ENCODE measurements at regions of chr6 and their contacts with region 1.

Region 1: DNA sequence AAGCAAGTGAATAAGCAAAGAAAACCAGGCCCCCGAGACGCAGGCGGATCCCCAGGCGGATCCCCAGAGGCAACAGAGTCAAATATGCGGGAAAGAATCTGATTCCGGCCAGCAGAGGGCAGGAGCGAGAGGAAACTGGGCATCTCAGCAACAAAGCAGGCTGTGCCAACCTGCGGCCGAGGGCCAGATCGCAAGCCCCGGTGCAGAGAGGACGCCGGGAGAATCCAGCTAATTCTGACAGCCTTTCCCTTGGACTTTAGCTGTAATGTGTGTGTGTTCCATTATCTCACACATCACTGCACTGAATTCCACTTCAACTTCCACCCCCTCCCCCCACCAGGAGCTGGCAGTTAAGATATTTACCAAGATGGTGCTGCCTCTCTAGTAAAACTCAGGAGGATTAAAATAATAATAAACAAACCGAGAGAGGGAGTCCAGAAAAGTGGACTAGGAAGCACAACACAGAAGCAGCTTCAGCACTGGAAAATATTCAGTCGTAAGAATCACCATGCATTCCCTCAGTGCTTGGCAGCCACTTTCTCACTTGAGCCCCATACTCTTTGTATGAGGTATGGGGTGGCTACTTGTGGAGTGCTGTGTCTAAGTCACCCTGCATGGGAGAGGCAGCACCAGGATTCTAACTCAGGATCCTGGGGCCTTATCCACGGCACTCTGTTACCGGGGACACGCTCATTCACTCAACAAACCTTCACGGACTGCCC is 66.2 kb upstream of the SNX9 start:
- DNase-seq: peak; percentile 88
- ATAC-seq: peak; percentile 38
- H3K4me3 Mint-ChIP-seq: no peak overlapping the region
- H3K27ac Mint-ChIP-seq: no peak overlapping the region
- H3K4me1 Mint-ChIP-seq: peaks cover 53% of the 10 kb centered on the region
- H3K27me3 Mint-ChIP-seq: peaks cover 14% of the 10 kb centered on the region

Region 2: GRCh38 chr6:157845493-157846259 is 88.8 kb after region 1 on chr6:
- CTCF ChIA-PET with region 1: interaction called, 13 read pairs
- POLR2A ChIA-PET with region 1: interaction called, 3 read pairs
- DNase-seq: peak; percentile 10
- ATAC-seq: no peak
- H3K4me3 Mint-ChIP-seq: no peak overlapping the region
- H3K27ac Mint-ChIP-seq: no peak overlapping the region
- H3K4me1 Mint-ChIP-seq: peaks cover 34% of the 10 kb centered on the region
- H3K27me3 Mint-ChIP-seq: no peaks in the 10 kb centered on the region

Region 3: DNA sequence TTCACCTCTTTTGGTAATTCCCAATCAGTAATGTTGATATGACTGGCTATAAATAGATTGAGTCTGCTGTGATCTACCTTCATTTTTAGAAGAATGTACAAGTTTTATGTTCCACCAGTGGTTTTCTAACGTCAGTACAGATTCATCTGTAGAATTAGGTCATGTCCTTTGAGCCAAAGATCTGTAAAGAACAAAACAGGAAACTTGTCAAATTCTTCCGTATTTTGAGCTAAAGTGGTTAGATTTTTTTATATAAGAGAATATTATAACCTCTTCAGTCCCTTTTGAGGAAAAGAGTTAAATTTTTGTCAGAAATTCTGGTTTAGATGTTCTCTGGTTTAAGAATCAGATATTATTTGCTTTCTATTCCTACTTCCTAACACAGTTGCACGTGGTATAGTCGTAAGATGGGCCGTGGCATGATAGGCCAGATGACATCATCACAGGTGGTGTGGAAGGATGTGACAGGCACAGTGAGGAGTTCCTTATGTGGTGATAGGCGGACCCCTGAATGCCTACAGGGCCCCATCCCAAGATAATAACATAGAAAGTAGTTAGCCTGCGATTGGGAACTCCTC is 128.4 kb after region 1 on chr6:
- CTCF ChIA-PET with region 1: interaction called, 15 read pairs
- POLR2A ChIA-PET with region 1: no interaction called
- DNase-seq: peak; percentile 76
- ATAC-seq: peak; percentile 86
- H3K4me3 Mint-ChIP-seq: no peak overlapping the region
- H3K27ac Mint-ChIP-seq: peak overlapping the region; percentile 58
- H3K4me1 Mint-ChIP-seq: peaks cover 33% of the 10 kb centered on the region
- H3K27me3 Mint-ChIP-seq: no peaks in the 10 kb centered on the region

Region 4: DNA sequence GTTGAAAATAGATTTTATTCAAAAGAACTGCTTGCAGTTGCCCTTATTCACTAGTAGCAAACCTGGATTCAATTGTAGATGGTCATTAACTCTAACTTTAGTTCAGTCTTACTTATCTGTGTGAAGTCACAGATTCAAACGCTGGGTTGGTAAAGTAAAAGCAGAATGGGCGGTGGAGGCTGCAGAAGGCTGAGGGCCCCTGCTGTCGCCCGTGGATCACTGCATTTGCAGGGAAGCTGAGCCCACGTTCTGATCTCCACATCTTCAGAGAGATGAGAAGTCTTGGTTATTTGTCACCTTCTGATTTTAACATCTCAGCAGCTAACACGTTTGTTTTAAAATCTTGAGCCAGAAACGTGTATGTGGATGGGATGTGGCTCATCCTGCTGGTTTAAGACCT is 141.3 kb after region 1 on chr6:
- CTCF ChIA-PET with region 1: interaction called, 14 read pairs
- POLR2A ChIA-PET with region 1: no interaction called
- DNase-seq: no peak
- ATAC-seq: peak; percentile 51
- H3K4me3 Mint-ChIP-seq: no peak overlapping the region
- H3K27ac Mint-ChIP-seq: peak overlapping the region; percentile 35
- H3K4me1 Mint-ChIP-seq: peaks cover 21% of the 10 kb centered on the region
- H3K27me3 Mint-ChIP-seq: no peaks in the 10 kb centered on the region

Region 5: DNA sequence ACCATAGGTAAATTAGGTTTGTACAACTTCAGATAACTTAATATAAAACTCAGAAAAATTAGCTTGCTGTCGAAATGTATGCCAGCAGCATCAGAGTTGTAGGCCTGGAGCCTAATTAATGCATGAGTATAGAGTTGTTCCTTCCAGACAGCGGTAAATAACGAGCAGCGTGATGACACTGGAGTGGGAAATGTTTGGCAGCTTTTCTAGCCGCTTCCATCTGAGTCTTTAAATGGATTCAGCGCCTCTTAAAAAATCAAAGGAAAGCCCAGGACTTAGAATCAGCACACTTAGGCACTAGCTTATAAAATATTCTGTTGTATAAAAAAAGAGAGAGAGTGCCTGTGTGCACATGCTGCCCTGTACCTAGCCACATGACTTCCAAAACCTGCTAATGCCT is 181.0 kb after region 1 on chr6:
- CTCF ChIA-PET with region 1: interaction called, 13 read pairs
- POLR2A ChIA-PET with region 1: no interaction called
- DNase-seq: no peak
- ATAC-seq: no peak
- H3K4me3 Mint-ChIP-seq: no peak overlapping the region
- H3K27ac Mint-ChIP-seq: no peak overlapping the region
- H3K4me1 Mint-ChIP-seq: peaks cover 6% of the 10 kb centered on the region
- H3K27me3 Mint-ChIP-seq: no peaks in the 10 kb centered on the region

Region 6: DNA sequence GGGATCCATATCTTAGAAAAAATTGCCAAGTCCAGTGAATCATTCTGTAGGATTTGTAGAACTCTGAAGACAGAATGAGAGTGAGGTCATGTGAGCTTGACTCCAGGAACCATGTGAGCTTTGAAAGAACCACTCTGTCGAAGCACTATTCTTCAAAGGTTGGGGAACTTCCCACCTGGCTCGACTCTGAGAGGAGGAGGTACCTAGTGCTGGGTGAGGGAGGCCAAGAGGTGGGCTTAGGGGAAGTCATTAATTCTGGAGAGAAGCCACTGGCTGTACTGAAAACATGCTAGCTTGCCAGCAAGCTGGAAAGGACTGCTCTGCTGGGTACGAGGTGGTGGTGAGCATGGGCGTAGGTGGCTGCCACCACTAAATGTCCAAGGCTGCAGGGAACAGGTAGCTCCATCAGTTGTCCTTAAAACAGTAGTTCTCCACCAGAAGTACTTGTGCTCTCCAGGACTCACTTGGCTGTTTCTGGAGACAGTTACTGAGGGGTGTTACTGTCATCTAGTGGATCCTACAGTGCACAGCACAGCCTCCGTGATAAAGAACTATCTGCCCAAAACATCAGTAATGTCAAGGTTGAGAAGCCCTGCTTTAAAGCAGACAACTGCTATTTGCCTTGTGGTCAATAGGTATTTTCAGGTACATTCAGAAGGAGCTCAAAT is 190.1 kb after region 1 on chr6:
- CTCF ChIA-PET with region 1: interaction called, 15 read pairs
- POLR2A ChIA-PET with region 1: no interaction called
- DNase-seq: no peak
- ATAC-seq: peak; percentile 78
- H3K4me3 Mint-ChIP-seq: no peak overlapping the region
- H3K27ac Mint-ChIP-seq: no peak overlapping the region
- H3K4me1 Mint-ChIP-seq: peaks cover 7% of the 10 kb centered on the region
- H3K27me3 Mint-ChIP-seq: peaks cover 12% of the 10 kb centered on the region